ENCODE measurements at regions of chr1 and their contacts with region 1.

Region 1: GRCh38 chr1:190491404-190491803 is 13.7 kb upstream of the BRINP3 start:
- DNase-seq: no peak
- H3K4me3 ChIP-seq: no peak overlapping the region
- H3K27ac ChIP-seq: no peak overlapping the region
- H3K4me1 ChIP-seq: no peaks in the 10 kb centered on the region
- H3K27me3 ChIP-seq: no peaks in the 10 kb centered on the region
- CTCF ChIP-seq: no peak
- POLR2A ChIP-seq: no peak

Region 2: GRCh38 chr1:191163631-191164030 is 672.2 kb after region 1 on chr1:
- intact Hi-C with region 1: loop called (anchors 10 kb)
- DNase-seq: no peak
- H3K4me3 ChIP-seq: no peak overlapping the region
- H3K27ac ChIP-seq: no peak overlapping the region
- H3K4me1 ChIP-seq: no peaks in the 10 kb centered on the region
- H3K27me3 ChIP-seq: no peaks in the 10 kb centered on the region
- CTCF ChIP-seq: no peak
- POLR2A ChIP-seq: no peak